B cell (primary cell): ENCODE measurements at regions of chr18 and their contacts with region 1.

Region 1: GRCh38 chr18:3245853-3246634 is 1.6 kb upstream of the MYL12A start:
- DNase-seq: peak; percentile 86
- ATAC-seq: peak; percentile 55
- H3K4me3 ChIP-seq: peak overlapping the region; percentile 91 to 99 (median 96)
- H3K4me3 Mint-ChIP-seq: peak overlapping the region; percentile 91
- H3K27ac ChIP-seq: peak overlapping the region; percentile 89 to 94
- H3K27ac Mint-ChIP-seq: peak overlapping the region; percentile 97
- H3K4me1 ChIP-seq: peaks cover 28 to 37% of the 10 kb centered on the region in 2 donors
- H3K4me1 Mint-ChIP-seq: peaks cover 37% of the 10 kb centered on the region
- H3K27me3 ChIP-seq: no peaks in the 10 kb centered on the region
- H3K27me3 Mint-ChIP-seq: no peaks in the 10 kb centered on the region
- CTCF ChIP-seq: peak; percentile 86

Region 2: GRCh38 chr18:2571200-2572143 is 674.6 kb before region 1 on chr18 and contains the starts of genes METTL4 and NDC80:
- CTCF ChIA-PET with region 1: no interaction called
- POLR2A ChIA-PET with region 1: no interaction called
- intact Hi-C with region 1: loop called (anchors 2 kb)
- DNase-seq: peak; percentile 95
- ATAC-seq: peak; percentile 93
- H3K4me3 ChIP-seq: peak within 1 kb of the TSS; percentile 70 to 99 (median 81)
- H3K4me3 Mint-ChIP-seq: peak within 1 kb of the TSS; percentile 99
- H3K27ac ChIP-seq: peak within 1 kb of the TSS; percentile 97 to 98
- H3K27ac Mint-ChIP-seq: peak within 1 kb of the TSS; percentile 99
- H3K4me1 ChIP-seq: peaks cover 22 to 23% of the 10 kb centered on the region in 2 donors
- H3K4me1 Mint-ChIP-seq: peaks cover 45% of the 10 kb centered on the region
- H3K27me3 ChIP-seq: no peaks in the 10 kb centered on the region
- H3K27me3 Mint-ChIP-seq: no peaks in the 10 kb centered on the region
- CTCF ChIP-seq: no peak
- total RNA-seq, gene METTL4: 23.9 and 31.6 TPM in 2 replicates
- total RNA-seq, gene NDC80: 3.7 and 3.9 TPM in 2 replicates

Region 3: DNA sequence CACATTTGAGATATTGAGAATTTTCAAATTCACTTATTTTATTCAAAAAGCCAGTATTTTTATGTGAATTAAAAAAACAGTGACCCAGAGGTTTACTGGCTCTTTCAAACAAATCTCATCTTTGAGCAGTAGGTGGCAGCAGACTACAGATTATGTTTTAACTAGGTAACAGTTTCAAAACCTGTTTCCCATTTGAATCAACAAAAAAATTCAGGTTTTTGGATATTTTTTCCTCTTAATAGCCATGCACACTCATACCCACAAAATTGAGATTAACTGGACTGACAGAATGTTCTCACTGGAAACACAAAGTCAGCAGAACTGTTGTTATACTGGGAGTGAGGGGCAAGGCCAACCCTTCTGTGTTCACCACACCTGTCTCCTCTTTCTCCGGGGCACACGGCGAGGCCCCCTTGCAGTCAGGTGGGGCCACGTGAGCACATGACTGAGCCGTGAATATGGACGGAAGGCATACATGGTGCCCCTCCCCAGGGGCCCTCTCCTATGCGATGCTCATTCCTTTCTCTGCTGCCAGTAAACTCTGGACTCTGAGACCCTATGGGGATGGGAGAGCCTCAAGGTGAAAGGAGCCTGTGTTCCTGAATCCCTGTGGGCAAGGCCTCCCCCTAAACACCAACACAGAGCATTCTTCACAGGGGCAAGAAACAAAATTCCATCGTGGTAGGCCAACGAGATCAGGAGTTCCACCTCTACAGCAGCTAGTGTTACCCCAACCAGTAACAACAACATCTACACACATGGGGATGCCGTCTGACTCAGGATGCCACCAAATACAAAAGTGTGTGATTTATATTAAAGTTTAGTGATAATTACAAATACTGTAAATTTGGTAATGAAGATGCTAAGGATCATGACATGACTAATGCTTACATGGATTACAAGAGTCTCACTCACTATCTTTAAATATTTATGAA is 313.5 kb before region 1 on chr18:
- CTCF ChIA-PET with region 1: interaction called, 94 read pairs
- POLR2A ChIA-PET with region 1: interaction called, 3 read pairs
- intact Hi-C with region 1: loop called (anchors 1 kb)
- DNase-seq: peak; percentile 78
- ATAC-seq: peak; percentile 73
- H3K4me3 ChIP-seq: no peak overlapping the region
- H3K4me3 Mint-ChIP-seq: no peak overlapping the region
- H3K27ac ChIP-seq: no peak overlapping the region
- H3K27ac Mint-ChIP-seq: peak overlapping the region; percentile 64
- H3K4me1 ChIP-seq: peaks cover 0 to 4% of the 10 kb centered on the region in 2 donors
- H3K4me1 Mint-ChIP-seq: peaks cover 8% of the 10 kb centered on the region
- H3K27me3 ChIP-seq: no peaks in the 10 kb centered on the region
- H3K27me3 Mint-ChIP-seq: no peaks in the 10 kb centered on the region
- CTCF ChIP-seq: peak; percentile 92

Region 4: GRCh38 chr18:2985628-2986027 is 260.4 kb before region 1 on chr18:
- CTCF ChIA-PET with region 1: interaction called, 78 read pairs
- POLR2A ChIA-PET with region 1: no interaction called
- intact Hi-C with region 1: loop called (anchors 2 kb)
- DNase-seq: peak; percentile 72
- ATAC-seq: peak; percentile 69
- H3K4me3 ChIP-seq: no peak overlapping the region
- H3K4me3 Mint-ChIP-seq: no peak overlapping the region
- H3K27ac ChIP-seq: no peak overlapping the region
- H3K27ac Mint-ChIP-seq: no peak overlapping the region
- H3K4me1 ChIP-seq: peaks cover 32 to 51% of the 10 kb centered on the region in 2 donors
- H3K4me1 Mint-ChIP-seq: peaks cover 51% of the 10 kb centered on the region
- H3K27me3 ChIP-seq: no peaks in the 10 kb centered on the region
- H3K27me3 Mint-ChIP-seq: no peaks in the 10 kb centered on the region
- CTCF ChIP-seq: peak; percentile 81

Region 5: DNA sequence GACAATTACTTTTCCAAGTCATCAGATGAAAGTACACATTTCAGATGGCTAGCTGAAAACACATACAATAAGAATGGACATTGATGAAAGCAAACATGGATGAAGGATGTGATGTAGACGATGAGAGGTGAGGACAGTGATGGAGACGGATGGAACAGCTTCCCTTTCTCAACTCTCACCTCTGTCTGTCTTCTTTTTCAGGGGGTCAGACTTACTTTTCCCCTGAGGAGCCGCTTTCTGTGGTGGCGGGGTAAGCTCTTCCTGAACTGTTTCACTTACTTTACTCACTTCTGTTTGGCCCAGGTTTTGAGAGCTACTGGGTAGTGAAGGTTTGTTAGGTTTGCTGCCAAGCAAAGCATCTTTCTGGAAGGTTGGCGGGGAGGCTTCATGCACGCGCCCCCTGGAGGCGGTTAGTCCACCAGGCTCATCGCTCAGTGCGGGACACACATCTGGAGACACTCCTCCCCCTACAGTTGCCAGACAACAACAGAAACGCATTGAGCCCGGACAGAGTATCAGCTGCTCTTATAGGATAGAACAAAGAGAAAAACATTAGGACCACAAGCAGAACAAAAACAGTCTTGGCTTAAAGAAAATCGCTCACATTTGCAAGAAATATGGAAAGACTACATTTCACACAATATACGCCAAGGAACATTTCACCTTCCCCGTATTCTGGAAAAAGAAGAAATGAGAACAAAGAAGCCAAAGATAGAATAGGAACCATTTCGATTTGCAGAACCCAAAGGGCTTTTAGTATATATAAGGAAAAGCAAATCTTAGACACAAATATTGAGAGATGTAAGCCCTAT is 116.8 kb before region 1 on chr18:
- CTCF ChIA-PET with region 1: interaction called, 63 read pairs
- POLR2A ChIA-PET with region 1: interaction called, 7 read pairs
- intact Hi-C with region 1: loop called (anchors 1 kb)
- DNase-seq: peak; percentile 80
- ATAC-seq: peak; percentile 98
- H3K4me3 ChIP-seq: no peak overlapping the region
- H3K4me3 Mint-ChIP-seq: peak overlapping the region; percentile 4
- H3K27ac ChIP-seq: no peak overlapping the region
- H3K27ac Mint-ChIP-seq: no peak overlapping the region
- H3K4me1 ChIP-seq: peaks cover 0 to 4% of the 10 kb centered on the region in 2 donors
- H3K4me1 Mint-ChIP-seq: peaks cover 6% of the 10 kb centered on the region
- H3K27me3 ChIP-seq: no peaks in the 10 kb centered on the region
- H3K27me3 Mint-ChIP-seq: no peaks in the 10 kb centered on the region
- CTCF ChIP-seq: peak; percentile 89

Region 6: DNA sequence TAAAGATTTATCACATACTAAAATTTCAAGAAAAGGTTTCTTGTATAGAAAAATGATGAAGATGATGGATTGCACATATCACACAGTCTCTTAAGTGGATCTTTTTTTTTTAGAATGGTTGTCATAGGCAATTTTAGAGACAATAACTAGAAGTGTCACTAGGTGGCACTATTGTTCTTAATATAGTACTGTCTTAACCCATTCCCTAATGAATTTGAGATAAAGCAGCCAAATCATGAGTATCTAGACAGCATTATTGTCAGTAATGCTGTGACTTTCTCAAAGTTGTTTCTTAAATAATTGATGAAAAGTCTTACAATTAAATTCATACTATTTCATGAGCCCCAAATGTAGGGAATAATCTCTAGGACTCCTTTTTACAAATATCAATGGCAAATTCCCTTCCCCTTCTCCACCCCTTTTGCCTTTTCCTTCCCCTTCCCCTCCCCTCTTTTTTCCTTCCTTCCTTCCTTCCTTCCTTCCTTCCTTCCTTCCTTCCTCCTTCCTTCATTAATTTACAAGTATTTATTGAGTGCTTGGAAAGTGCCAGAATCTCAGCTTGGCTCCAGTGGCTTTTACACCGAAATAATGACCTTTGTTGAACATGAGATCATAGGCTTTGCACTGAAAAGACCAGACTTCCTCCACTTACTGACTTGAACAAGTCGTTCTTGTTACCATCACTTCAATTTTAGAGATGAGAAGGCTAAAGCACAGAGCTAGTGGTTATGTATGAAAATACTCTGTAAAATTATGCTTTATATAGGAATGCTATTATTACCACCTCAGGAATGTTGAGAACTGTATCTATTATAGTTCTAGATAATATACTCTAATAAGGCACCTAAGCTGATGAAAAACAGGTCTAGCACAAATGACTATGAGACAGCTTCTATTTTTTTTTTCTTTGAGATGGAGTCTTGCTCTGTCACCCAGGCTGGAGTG is 35.7 kb after region 1 on chr18:
- CTCF ChIA-PET with region 1: interaction called, 19 read pairs
- POLR2A ChIA-PET with region 1: interaction called, 8 read pairs
- intact Hi-C with region 1: loop called (anchors 2 kb)
- DNase-seq: peak; percentile 85
- ATAC-seq: peak; percentile 48
- H3K4me3 ChIP-seq: no peak overlapping the region
- H3K4me3 Mint-ChIP-seq: no peak overlapping the region
- H3K27ac ChIP-seq: no peak overlapping the region
- H3K27ac Mint-ChIP-seq: no peak overlapping the region
- H3K4me1 ChIP-seq: peaks cover 22 to 27% of the 10 kb centered on the region in 2 donors
- H3K4me1 Mint-ChIP-seq: peaks cover 29% of the 10 kb centered on the region
- H3K27me3 ChIP-seq: no peaks in the 10 kb centered on the region
- H3K27me3 Mint-ChIP-seq: no peaks in the 10 kb centered on the region
- CTCF ChIP-seq: peak; percentile 89

Region 7: DNA sequence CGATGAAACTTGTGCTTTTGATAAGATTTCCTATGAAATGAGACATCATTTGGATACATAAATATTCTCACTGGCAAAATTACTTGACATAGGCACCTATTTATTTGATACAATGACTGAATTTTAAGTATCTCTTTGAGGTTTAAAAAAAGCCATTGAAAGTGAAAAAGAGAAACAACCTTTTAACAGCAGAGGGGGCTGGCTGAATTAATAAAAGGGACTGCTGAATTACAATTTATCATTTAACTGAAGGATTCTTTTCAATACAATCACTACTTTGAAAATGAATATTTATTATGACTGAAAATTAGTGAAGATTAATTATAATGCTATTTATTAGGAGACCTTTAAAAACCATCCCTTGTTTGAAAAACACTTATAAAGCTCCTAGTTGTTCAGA is 873.8 kb after region 1 on chr18:
- CTCF ChIA-PET with region 1: no interaction called
- POLR2A ChIA-PET with region 1: no interaction called
- intact Hi-C with region 1: no loop called
- DNase-seq: no peak
- ATAC-seq: no peak
- H3K4me3 ChIP-seq: no peak overlapping the region
- H3K4me3 Mint-ChIP-seq: no peak overlapping the region
- H3K27ac ChIP-seq: no peak overlapping the region
- H3K27ac Mint-ChIP-seq: no peak overlapping the region
- H3K4me1 ChIP-seq: no peaks in the 10 kb centered on the region
- H3K4me1 Mint-ChIP-seq: no peaks in the 10 kb centered on the region
- H3K27me3 ChIP-seq: no peaks in the 10 kb centered on the region
- H3K27me3 Mint-ChIP-seq: no peaks in the 10 kb centered on the region
- CTCF ChIP-seq: no peak